IMR-90 (cell line): ENCODE measurements at regions of chr12 and their contacts with region 1.

Region 1: DNA sequence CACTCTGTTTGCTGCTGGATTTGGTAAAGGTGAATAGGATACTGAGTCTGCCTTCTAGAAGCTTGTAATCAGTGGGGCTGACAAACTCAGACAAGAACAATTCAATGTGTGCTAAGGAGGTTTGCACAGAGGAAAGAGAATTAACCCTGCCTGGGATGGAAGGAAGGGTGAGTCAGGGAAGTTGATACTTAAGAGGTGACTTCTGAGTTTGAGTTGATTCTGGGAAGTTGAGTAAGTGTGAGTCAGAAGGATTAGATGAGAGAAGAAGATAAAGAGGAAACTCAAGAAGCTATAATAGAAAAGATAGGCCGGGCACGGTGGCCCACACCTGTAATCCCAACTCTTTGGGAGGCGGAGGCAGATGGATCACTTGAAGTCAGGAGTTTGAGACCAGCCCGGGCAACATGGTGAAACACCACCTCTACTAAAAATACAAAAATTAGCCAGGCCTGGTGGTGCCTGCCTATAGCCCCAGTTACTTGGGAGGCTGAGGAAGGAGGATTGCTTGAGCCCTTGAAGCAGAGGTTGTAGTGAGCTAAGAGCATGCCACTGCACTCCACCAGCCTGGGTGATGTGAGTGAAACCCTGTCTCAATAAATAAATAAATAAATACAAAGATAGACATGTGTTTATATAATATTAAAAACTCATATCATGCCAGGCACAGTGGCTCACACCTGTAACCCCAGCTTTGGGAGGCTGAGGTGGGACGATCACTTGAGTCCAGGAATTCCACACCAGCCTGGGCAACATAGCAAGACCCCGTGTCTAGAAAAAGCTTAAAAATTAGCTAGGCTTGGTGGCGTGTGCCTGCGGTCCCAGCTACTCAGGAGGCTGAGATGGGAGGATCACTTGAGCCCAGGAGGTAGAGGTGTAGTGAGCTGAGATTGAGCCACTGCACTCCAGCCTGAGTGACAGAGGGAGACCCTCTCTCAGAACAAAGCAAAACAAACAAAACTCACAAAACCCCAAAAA is 126.8 kb upstream of the CPM start:
- DNase-seq: peak; percentile 96
- ATAC-seq: peak; percentile 73
- H3K4me3 ChIP-seq: no peak overlapping the region
- H3K27ac ChIP-seq: peak overlapping the region; percentile 39; the same call in 1 of the 2 replicates
- H3K4me1 ChIP-seq: peaks cover 16% of the 10 kb centered on the region
- H3K27me3 ChIP-seq: no peaks in the 10 kb centered on the region
- CTCF ChIP-seq: no peak
- POLR2A ChIP-seq: no peak
- RAD21 ChIP-seq: no peak

Region 2: GRCh38 chr12:68962875-68963855 is 96.6 kb before region 1 on chr12:
- CTCF ChIA-PET with region 1: interaction called, 4 read pairs
- POLR2A ChIA-PET with region 1: no interaction called
- dilution Hi-C with region 1: no loop called
- in situ Hi-C with region 1: no loop called
- intact Hi-C with region 1: loop called (anchors 5 kb)
- DNase-seq: peak; percentile 70
- ATAC-seq: peak; percentile 55
- H3K4me3 ChIP-seq: no peak overlapping the region
- H3K27ac ChIP-seq: peak overlapping the region; percentile 32; the same call in 1 of the 2 replicates
- H3K4me1 ChIP-seq: peaks cover 17% of the 10 kb centered on the region
- H3K27me3 ChIP-seq: no peaks in the 10 kb centered on the region
- CTCF ChIP-seq: no peak
- POLR2A ChIP-seq: no peak
- RAD21 ChIP-seq: no peak